GM12878 (cell line): ENCODE measurements at regions of chr3 and their contacts with region 1.

Region 1: DNA sequence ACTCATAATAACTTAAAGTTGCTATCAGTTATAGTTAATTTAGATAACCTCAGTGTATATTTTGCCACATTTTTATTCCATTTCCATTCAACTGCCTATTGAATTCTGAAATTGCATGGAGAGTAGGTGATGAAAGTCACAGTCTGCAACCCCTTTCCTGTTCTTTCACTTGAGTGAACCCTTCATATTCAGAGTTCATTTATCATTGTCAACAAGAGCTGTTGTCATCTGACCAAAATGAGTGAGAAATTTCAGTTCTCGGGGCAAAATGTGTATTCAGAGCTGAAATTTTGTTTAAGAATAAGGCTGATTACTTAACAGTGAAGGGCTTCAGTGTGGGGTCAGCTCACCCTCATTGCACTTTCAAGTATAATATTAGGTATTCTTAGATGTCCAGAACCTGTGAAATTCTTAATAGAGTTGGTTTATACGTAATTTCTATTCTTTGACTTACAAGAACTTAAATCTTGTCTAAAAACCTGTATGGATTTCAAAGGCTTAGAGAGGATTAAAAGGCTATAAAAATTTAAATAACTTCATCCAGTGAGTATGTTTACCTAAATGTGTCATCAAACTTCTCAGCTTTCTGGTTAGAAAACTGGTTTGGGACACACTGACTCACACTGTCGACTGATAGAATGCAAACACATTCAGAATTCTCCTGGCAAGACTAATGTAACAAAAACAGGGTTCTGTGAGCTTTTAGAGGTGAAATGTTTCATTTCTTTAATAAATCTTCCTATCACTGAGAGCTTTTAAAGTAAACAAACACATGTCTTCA is 92.2 kb downstream of the CMSS1 start:
- DNase-seq: no peak
- ATAC-seq: peak; percentile 35
- H3K4me3 ChIP-seq: no peak overlapping the region
- H3K27ac ChIP-seq: no peak overlapping the region
- H3K4me1 ChIP-seq: no peaks in the 10 kb centered on the region
- H3K27me3 ChIP-seq: no peaks in the 10 kb centered on the region
- CTCF ChIP-seq: no peak
- EP300 ChIP-seq: no peak
- POLR2A ChIP-seq: no peak
- RAD21 ChIP-seq: no peak

Region 2: DNA sequence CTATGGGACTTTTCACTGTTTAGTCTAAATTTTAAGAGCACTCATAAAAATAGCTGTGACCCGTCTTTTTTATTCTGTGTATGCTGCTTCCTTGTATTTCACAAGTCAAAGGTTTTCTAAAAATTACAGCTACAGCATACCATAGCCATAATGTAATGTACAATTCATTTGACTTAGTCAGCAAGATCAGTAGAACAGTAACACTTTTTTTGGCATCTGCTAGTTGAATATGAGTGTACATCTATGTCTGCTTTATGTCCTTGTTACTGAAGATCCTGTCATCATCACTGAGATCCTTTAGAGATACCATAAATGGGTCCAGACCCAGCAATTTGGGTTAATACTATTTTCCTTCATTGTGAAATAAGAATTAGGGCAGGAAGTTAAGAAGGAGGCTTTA is 50.1 kb before region 1 on chr3:
- CTCF ChIA-PET with region 1: no interaction called
- POLR2A ChIA-PET with region 1: no interaction called
- RAD21 ChIA-PET with region 1: no interaction called
- SMC1A ChIA-PET with region 1: no interaction called
- in situ Hi-C with region 1: loop called (anchors 10 kb)
- intact Hi-C with region 1: no loop called
- DNase-seq: no peak
- ATAC-seq: no peak
- H3K4me3 ChIP-seq: no peak overlapping the region
- H3K27ac ChIP-seq: no peak overlapping the region
- H3K4me1 ChIP-seq: peaks cover 8% of the 10 kb centered on the region
- H3K27me3 ChIP-seq: no peaks in the 10 kb centered on the region
- CTCF ChIP-seq: no peak
- EP300 ChIP-seq: no peak
- POLR2A ChIP-seq: no peak
- RAD21 ChIP-seq: no peak

Region 3: GRCh38 chr3:99884484-99884883 is 25.4 kb before region 1 on chr3:
- CTCF ChIA-PET with region 1: no interaction called
- POLR2A ChIA-PET with region 1: no interaction called
- RAD21 ChIA-PET with region 1: no interaction called
- SMC1A ChIA-PET with region 1: no interaction called
- in situ Hi-C with region 1: no loop called
- intact Hi-C with region 1: loop called (anchors 1 kb)
- DNase-seq: no peak
- ATAC-seq: no peak
- H3K4me3 ChIP-seq: no peak overlapping the region
- H3K27ac ChIP-seq: no peak overlapping the region
- H3K4me1 ChIP-seq: no peaks in the 10 kb centered on the region; the same call in 1 of the 2 replicates
- H3K27me3 ChIP-seq: no peaks in the 10 kb centered on the region
- CTCF ChIP-seq: no peak
- EP300 ChIP-seq: no peak
- POLR2A ChIP-seq: no peak
- RAD21 ChIP-seq: no peak

Region 4: GRCh38 chr3:99970198-99970597 is 60.3 kb after region 1 on chr3:
- CTCF ChIA-PET with region 1: no interaction called
- POLR2A ChIA-PET with region 1: no interaction called
- RAD21 ChIA-PET with region 1: no interaction called
- SMC1A ChIA-PET with region 1: no interaction called
- in situ Hi-C with region 1: no loop called
- intact Hi-C with region 1: no loop called
- DNase-seq: peak; percentile 70
- ATAC-seq: peak; percentile 97
- H3K4me3 ChIP-seq: no peak overlapping the region
- H3K27ac ChIP-seq: peak overlapping the region; percentile 25
- H3K4me1 ChIP-seq: peaks cover 17% of the 10 kb centered on the region
- H3K27me3 ChIP-seq: no peaks in the 10 kb centered on the region
- CTCF ChIP-seq: no peak
- EP300 ChIP-seq: peak in 1 of 2 experiments; percentile 35; a peak in 2 of 4 replicates
- POLR2A ChIP-seq: no peak
- RAD21 ChIP-seq: no peak